Vagina (tissue), 2 donors: ENCODE measurements at regions of chr2 and their contacts with region 1.

Region 1: GRCh38 chr2:115921541-115921940 is 1479.1 kb downstream of the DPP10 start:
- DNase-seq: no peak
- H3K4me3 ChIP-seq: no peak overlapping the region
- H3K27ac ChIP-seq: no peak overlapping the region
- H3K4me1 ChIP-seq: no peaks in the 10 kb centered on the region
- H3K27me3 ChIP-seq: no peaks in the 10 kb centered on the region
- CTCF ChIP-seq: no peak
- POLR2A ChIP-seq: no peak

Region 2: DNA sequence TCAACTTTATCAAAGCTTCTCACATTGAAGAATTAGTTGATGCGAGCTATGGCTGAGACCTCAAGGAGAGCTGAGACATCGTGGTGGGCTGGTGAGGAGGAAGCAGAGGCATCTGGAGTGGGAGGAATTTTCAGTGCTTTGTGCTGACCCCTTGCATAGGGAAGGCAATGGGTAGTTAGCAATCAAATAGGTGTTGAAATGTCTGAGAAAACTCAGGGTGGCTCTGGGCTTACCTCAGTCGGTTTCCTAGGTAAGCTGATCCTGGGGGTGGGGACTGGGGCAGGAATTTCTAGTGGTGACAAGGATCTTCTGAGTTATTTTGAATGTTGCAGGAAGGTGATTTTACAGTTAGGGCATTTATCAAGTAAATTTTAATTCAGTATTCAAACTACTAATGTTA is 1499.8 kb before region 1 on chr2:
- intact Hi-C with region 1: loop called (anchors 5 kb)
- DNase-seq: no peak
- H3K4me3 ChIP-seq: no peak overlapping the region
- H3K27ac ChIP-seq: no peak overlapping the region
- H3K4me1 ChIP-seq: no peaks in the 10 kb centered on the region
- H3K27me3 ChIP-seq: no peaks in the 10 kb centered on the region
- CTCF ChIP-seq: no peak
- POLR2A ChIP-seq: no peak